Activated B cell treated with CpG ODN at 0.5 μM for 24 hours (primary cell): ENCODE measurements at regions of chr20 and their contacts with region 1.

Region 1: GRCh38 chr20:16801919-16802911 is 54.1 kb downstream of the OTOR start:
- DNase-seq: peak; percentile 30
- ATAC-seq: peak; percentile 37
- H3K4me3 Mint-ChIP-seq: no peak overlapping the region
- H3K27ac Mint-ChIP-seq: no peak overlapping the region
- H3K4me1 Mint-ChIP-seq: no peaks in the 10 kb centered on the region
- H3K27me3 Mint-ChIP-seq: peaks cover 33% of the 10 kb centered on the region
- CTCF ChIP-seq: peak; percentile 84

Region 2: DNA sequence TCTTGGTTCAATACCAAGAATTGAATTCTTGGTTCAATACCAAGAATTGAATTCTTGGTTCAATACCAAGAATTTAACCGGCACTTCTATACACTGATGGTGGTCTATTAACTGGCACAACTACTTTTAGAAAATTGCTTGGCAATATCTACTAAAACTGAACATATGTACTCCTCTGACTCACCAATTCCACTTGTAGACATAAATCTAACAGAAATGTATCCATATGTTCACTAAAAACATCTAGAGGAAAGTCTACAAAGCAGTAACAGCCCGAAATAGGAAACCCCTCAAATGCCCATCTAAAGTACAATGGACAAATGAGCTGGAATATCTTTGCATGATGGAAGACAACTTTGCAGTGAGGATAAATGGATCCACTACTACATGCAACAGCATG is 300.9 kb before region 1 on chr20:
- CTCF ChIA-PET with region 1: no interaction called
- POLR2A ChIA-PET with region 1: no interaction called
- intact Hi-C with region 1: no loop called
- DNase-seq: no peak
- ATAC-seq: no peak
- H3K4me3 Mint-ChIP-seq: no peak overlapping the region
- H3K27ac Mint-ChIP-seq: no peak overlapping the region
- H3K4me1 Mint-ChIP-seq: peaks cover 4% of the 10 kb centered on the region
- H3K27me3 Mint-ChIP-seq: no peaks in the 10 kb centered on the region
- CTCF ChIP-seq: no peak

Region 3: GRCh38 chr20:16709017-16709416 is 93.2 kb before region 1 on chr20:
- CTCF ChIA-PET with region 1: no interaction called
- POLR2A ChIA-PET with region 1: no interaction called
- intact Hi-C with region 1: no loop called
- DNase-seq: no peak
- ATAC-seq: no peak
- H3K4me3 Mint-ChIP-seq: no peak overlapping the region
- H3K27ac Mint-ChIP-seq: no peak overlapping the region
- H3K4me1 Mint-ChIP-seq: peaks cover 18% of the 10 kb centered on the region
- H3K27me3 Mint-ChIP-seq: peaks cover 20% of the 10 kb centered on the region
- CTCF ChIP-seq: no peak

Region 4: GRCh38 chr20:16821211-16822089 is 19.2 kb after region 1 on chr20:
- CTCF ChIA-PET with region 1: interaction called, 13 read pairs
- POLR2A ChIA-PET with region 1: no interaction called
- intact Hi-C with region 1: loop called (anchors 1 kb)
- DNase-seq: no peak
- ATAC-seq: peak; percentile 67
- H3K4me3 Mint-ChIP-seq: no peak overlapping the region
- H3K27ac Mint-ChIP-seq: no peak overlapping the region
- H3K4me1 Mint-ChIP-seq: no peaks in the 10 kb centered on the region
- H3K27me3 Mint-ChIP-seq: peaks cover 15% of the 10 kb centered on the region
- CTCF ChIP-seq: peak; percentile 49

Region 5: GRCh38 chr20:17357218-17357617 is 555.0 kb after region 1 on chr20:
- CTCF ChIA-PET with region 1: no interaction called
- POLR2A ChIA-PET with region 1: no interaction called
- intact Hi-C with region 1: no loop called
- DNase-seq: no peak
- ATAC-seq: no peak
- H3K4me3 Mint-ChIP-seq: no peak overlapping the region
- H3K27ac Mint-ChIP-seq: no peak overlapping the region
- H3K4me1 Mint-ChIP-seq: no peaks in the 10 kb centered on the region
- H3K27me3 Mint-ChIP-seq: no peaks in the 10 kb centered on the region
- CTCF ChIP-seq: no peak

Region 6: GRCh38 chr20:17431621-17432364 is 629.6 kb after region 1 on chr20:
- CTCF ChIA-PET with region 1: interaction called, 48 read pairs
- POLR2A ChIA-PET with region 1: no interaction called
- intact Hi-C with region 1: loop called (anchors 1 kb)
- DNase-seq: peak; percentile 24
- ATAC-seq: no peak
- H3K4me3 Mint-ChIP-seq: no peak overlapping the region
- H3K27ac Mint-ChIP-seq: no peak overlapping the region
- H3K4me1 Mint-ChIP-seq: no peaks in the 10 kb centered on the region
- H3K27me3 Mint-ChIP-seq: peaks cover 14% of the 10 kb centered on the region
- CTCF ChIP-seq: peak; percentile 89

Region 7: GRCh38 chr20:18276821-18277220 is 1474.6 kb after region 1 on chr20:
- CTCF ChIA-PET with region 1: no interaction called
- POLR2A ChIA-PET with region 1: no interaction called
- intact Hi-C with region 1: loop called (anchors 5 kb)
- DNase-seq: peak; percentile 21
- ATAC-seq: peak; percentile 66
- H3K4me3 Mint-ChIP-seq: no peak overlapping the region
- H3K27ac Mint-ChIP-seq: no peak overlapping the region
- H3K4me1 Mint-ChIP-seq: no peaks in the 10 kb centered on the region
- H3K27me3 Mint-ChIP-seq: peaks cover 37% of the 10 kb centered on the region
- CTCF ChIP-seq: no peak